ENCODE measurements at regions of chr3 and their contacts with region 1.

Region 1: DNA sequence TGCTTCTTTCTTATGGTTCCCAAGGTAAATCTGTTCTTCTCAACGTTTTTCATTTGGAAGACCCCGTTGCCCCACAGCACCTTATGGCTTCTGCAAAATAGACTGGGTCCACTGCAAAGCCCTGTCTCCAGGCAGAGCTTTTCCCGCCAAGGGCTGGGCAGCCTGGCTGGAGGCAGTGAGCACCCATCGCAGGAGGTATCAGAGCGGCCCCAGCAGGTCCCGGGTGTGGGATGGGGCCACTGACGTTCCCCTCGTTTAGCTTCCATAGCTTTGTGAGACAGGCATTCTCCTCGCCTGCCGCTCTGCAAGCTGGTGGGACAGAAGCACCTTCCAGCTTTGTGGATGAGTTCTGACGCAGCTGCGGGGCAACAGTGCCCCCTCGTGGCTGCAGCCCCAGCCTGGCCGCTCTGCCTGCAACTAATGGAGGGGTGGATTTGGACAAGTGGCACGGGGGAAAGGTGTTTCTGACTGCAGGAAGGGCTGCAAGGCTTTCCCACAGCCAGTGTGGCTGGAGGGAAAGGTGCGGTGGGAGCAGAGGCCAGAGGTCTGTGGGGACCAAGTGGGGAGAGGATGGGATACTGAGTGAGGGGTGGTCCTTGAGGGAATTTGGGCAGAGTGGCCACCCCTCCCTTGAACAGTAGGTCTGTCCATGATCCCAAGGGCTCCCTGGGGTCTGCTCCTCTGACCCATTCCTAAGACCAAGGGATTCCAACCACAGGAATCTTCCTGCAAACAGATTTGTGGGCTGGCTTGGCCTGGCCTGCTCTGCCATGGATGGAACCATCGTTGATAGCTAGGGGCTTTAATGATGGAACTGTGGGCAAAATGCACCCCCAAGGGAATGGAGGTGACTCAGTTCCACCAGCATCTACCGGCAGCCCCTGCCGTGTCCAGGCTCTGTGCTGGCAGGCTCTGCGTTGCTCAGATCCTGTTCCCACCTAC is 99.4 kb downstream of the FBLN2 start:
- DNase-seq: no peak
- H3K4me3 ChIP-seq: no peak overlapping the region
- CTCF ChIP-seq: peak; percentile 99

Region 2: DNA sequence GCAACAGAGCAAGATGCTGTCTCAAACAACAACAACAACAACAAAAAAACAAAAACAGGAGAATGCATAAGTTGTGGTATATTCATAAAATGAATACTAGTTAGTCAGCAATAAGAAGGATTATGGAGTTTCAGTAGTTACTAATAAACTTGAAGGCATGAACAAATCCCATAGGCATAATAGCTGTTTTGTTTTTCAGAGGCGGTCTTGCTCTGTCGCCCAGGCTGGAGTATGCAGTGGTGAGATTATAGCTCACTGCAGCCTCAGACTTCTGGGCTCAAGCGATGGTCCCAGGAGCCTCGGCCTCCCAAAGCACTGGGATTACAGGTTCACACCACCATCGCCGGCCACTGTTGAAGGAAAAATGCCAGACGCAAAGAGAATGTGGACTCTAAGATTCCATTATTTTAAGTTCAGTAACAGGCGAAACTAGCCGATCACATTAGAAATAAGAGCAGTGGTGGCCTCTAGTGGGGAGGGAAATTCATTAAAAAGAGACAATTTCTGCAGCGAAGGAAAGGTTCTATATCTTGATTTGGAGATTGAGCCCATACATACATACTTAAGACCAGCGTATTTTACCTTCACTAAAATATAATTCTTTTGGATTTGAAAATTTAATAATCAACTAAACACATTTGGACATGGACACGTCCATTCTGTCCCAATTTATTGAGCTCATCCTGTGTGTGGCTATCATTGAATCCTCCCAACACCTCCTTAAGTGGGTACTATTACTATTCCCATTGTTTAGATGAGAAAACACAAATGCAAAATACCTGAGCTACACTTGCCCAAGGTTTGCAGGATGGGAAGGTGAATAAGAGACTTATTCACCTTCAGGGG is 195.6 kb before region 1 on chr3:
- CTCF ChIA-PET with region 1: interaction called, 20 read pairs
- POLR2A ChIA-PET with region 1: no interaction called
- DNase-seq: no peak
- H3K4me3 ChIP-seq: peak overlapping the region; percentile 18; the same call in 1 of the 2 replicates
- CTCF ChIP-seq: peak; percentile 49

Region 3: DNA sequence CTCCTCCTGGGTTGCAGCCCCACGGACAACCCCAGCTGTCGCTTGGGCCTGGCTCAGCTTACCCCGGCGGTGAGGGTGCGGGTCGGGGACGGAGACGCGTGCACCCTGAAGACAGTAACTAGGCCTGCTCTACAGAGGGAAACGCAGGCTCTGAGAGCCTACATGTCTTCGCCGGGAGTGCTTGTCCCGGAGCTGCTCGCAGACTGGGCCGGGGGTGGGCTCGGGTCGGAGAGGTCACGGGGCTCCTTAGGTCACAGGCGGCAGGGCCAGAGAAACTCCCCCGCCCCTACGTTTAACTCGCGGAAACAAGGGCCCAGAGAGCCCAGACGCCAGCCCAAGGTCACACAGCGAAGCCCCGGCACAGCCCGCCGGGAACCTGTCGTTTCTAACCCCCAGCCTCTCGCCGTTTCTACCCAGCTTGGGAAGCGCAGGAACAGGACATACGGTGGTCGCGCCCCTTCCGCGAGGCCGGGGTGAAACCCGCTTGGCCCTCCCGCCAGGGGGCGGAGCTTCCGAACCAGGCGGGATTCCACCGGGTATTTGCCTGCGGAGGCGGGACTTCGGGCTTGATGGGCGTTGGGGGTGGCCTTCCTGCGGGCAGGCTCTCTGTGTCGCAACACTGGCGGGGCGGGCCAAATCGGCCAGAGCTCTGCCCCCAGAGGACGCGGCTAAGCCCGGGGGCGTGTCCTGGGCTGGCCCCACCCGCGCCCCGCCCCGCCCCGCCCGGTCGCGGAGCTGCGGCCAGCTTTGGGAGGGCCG is 168.6 kb before region 1 on chr3 and contains the start of gene HDAC11:
- CTCF ChIA-PET with region 1: interaction called, 142 read pairs
- POLR2A ChIA-PET with region 1: no interaction called
- DNase-seq: peak; percentile 74
- H3K4me3 ChIP-seq: peak within 1 kb of the TSS; percentile 78
- CTCF ChIP-seq: no peak

Region 4: DNA sequence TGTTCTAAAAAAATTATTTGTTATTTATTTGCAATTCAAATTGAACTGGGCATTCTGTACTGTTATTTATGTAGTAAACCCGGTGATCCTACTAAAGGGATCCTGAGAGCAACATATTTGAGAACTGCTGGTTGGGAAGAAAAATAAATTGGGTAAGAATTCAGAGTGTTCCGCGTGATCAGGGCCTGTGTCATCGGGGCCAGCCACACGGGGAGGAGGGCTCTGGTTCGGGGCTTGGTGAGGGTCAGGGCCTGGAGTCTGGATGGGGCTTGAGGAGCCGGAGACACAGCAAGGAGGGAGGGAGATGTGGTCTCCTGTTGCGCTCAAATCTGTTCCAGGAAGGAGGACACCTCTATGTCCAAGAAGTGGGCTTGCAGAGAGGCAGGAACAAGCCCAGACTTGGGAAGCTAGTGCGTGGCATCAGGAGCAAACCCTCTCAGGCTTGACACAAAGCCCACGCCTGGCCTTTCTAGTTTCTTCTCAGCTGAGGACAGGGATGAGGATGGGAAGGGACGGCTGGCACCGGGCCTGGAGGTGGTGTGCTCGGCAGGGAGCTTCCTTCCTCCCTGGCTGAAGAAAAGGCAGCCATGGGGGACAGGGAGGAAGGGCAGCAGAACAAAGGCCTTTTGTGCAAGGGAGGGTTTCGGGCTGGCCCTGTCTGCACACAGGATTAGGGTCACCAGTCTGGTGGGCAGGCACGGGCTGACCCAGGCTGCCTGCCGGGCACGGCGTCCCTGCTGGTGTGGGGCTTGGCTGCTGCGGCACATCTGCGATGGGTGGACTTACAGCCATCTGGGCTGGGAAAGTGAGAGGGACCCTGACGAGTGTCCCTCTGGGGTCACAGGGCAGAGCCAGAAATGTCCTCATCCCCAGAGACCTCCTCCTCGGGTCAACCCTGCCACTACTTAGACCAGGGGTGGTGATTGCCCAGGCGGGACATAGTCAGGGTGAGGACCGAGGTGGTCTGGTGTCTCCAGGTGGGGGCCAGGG is 122.2 kb before region 1 on chr3:
- CTCF ChIA-PET with region 1: interaction called, 10 read pairs
- POLR2A ChIA-PET with region 1: no interaction called
- DNase-seq: no peak
- H3K4me3 ChIP-seq: no peak overlapping the region
- CTCF ChIP-seq: no peak

Region 5: DNA sequence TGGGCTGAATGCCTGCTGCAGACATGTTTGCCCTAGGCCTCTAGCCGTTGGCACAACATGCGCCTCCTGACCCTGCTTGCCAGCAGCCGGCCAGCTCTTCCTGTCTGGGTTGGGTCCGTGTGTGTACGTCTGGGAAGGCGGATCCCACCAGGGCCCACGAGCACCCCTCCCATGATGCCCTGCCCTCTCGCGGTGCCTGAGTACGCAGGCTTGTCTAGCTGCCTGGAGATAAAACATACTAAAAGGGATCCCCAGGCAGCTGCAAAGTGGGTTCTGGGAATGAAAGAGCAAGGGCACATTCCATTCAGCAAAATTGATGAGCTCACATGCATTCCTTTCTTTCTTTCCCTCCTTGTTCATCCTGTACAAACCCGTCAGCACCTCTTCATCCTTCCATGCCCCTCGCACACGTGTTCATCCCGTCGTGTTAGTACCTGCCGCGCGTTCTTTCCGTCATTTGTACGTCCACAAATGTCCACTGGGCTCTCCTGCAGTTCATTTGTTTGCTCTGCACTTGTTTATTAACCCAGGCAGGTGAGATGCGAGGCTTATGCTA is 25.2 kb before region 1 on chr3:
- CTCF ChIA-PET with region 1: interaction called, 38 read pairs
- POLR2A ChIA-PET with region 1: no interaction called
- DNase-seq: no peak
- H3K4me3 ChIP-seq: no peak overlapping the region
- CTCF ChIP-seq: no peak

Region 6: GRCh38 chr3:13801361-13802214 is 153.3 kb after region 1 on chr3:
- CTCF ChIA-PET with region 1: no interaction called
- POLR2A ChIA-PET with region 1: no interaction called
- DNase-seq: no peak
- H3K4me3 ChIP-seq: no peak overlapping the region
- CTCF ChIP-seq: no peak

Measured in AG04449 (cell line).